Activated CD8-positive, alpha-beta T cell treated with anti-CD3 and anti-CD28 coated beads for 36 hours (primary cell): ENCODE measurements at regions of chr1 and their contacts with region 1.

Region 1: DNA sequence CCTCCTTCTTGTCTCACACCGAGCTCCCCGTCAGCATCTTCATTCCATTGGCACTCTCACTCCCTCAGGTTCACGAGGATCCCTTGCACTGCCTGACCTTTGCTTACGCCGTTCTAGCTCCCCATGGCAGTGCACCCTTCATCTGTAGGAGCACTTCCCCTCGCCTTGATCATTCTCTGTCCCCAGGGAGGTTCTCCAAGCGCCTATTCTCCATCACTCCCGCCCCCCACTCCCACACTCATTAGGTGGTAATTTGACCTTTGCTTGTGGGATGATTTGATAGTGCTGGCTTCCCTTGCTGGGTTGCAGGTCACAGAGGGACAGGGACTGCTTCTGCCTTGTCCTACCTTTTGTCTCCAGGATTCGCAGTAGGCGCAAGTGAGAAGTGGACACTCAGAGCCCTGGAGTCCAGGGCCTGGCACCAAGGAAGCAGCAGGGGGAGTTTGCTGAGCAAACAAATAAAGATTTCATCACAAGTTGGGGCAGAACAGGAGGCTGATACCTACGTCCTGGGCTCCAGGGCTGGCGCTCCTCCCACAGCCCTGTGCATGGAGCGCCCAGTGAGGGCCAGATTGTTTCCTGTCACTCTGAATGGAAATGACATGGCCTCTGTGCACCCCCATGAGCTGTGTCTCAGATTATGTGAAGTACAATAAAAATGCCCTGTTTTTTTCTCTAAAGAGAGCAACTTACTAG is 82.0 kb upstream of the RUNX3 start:
- DNase-seq: peak; percentile 74
- ATAC-seq: peak; percentile 79
- H3K4me3 Mint-ChIP-seq: no peak overlapping the region
- H3K27ac Mint-ChIP-seq: peak overlapping the region; percentile 86
- H3K4me1 Mint-ChIP-seq: peaks cover 68% of the 10 kb centered on the region
- H3K27me3 Mint-ChIP-seq: no peaks in the 10 kb centered on the region
- CTCF ChIP-seq: no peak

Region 2: DNA sequence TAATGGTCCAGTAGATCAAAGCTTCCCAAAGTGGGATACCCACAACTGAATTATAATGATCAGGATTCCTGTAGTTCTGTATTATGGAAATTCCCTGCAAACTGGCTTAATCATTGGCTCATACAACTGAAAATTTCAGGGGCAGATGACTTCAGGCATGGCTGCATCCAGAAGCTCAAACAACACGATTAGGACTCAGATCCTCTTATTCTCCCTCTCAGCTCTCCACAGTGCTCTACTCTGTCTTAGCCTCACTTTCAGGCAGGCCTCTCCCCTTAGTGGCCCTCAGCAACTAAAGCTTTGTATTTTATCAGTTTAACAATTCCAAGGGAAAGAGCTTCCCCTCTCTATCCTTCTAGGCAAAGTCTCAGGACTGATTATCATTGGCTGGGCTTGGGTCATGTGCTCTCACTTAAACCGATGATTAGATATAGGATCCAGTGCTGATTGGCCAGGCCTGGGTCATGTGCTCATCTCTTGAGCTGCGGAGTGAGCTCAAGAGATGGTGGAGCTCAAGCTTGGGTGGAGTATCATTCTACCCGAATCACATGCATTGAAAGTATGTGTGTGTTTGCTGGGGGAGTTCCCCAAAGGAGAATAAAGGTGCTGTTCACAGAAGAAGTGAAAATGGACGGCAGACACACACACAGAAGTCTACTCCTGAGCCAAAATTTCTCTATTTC is 24.1 kb before region 1 on chr1:
- CTCF ChIA-PET with region 1: interaction called, 9 read pairs
- POLR2A ChIA-PET with region 1: interaction called, 24 read pairs
- intact Hi-C with region 1: no loop called
- DNase-seq: peak; percentile 83
- ATAC-seq: peak; percentile 76
- H3K4me3 Mint-ChIP-seq: no peak overlapping the region
- H3K27ac Mint-ChIP-seq: peak overlapping the region; percentile 82
- H3K4me1 Mint-ChIP-seq: peaks cover 95% of the 10 kb centered on the region
- H3K27me3 Mint-ChIP-seq: no peaks in the 10 kb centered on the region
- CTCF ChIP-seq: no peak

Region 3: DNA sequence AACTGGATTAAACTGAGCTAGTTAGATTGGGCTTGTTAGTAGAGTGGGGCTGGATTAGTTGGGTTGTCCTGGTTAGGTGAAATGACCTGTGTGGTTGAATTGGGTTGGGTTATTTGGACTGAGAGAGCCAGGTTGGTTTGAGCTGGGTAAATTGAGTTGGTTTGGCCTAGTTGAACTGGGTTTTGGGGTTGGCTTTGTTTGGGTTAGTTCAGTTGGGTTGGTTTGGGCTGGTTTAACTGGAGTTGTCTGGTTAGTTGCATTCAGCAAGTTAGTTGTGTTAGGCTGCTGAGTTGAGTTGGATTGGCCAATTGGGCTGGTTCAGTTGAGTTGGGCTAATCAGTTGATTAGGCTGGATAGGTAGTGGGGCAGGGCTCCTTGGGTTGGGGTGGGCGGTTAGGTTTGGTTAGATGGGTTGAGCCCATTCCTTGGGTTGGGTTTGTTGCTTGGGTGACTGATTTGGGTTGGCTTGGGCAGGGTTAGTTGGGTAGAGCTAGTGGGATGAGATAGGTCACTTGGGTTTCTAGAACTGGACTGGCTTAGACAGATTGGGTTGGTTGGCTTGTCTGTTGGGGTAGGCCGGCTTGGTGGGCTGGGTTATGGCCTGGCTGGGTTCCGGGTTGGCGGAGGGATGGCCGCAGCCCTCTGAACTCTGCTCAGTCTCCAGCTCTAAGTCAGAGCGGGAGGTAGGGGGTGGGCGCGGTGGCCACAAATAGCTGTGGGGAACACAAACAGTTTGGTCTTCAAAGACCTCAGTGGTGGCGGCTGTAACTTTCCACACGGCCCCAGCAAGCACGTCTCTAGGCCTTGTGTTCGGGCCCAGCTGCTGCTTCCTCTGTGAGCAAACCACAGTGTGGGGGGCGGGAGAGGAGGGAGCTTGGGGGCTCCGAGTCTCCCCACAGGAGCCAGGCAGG is 14.9 kb before region 1 on chr1:
- CTCF ChIA-PET with region 1: interaction called, 22 read pairs
- POLR2A ChIA-PET with region 1: interaction called, 24 read pairs
- intact Hi-C with region 1: no loop called
- DNase-seq: peak; percentile 99
- ATAC-seq: peak; percentile 74
- H3K4me3 Mint-ChIP-seq: peak overlapping the region; percentile 73
- H3K27ac Mint-ChIP-seq: peak overlapping the region; percentile 97
- H3K4me1 Mint-ChIP-seq: peaks cover 92% of the 10 kb centered on the region
- H3K27me3 Mint-ChIP-seq: no peaks in the 10 kb centered on the region
- CTCF ChIP-seq: no peak

Region 4: GRCh38 chr1:25053576-25054250 is 41.6 kb after region 1 on chr1:
- CTCF ChIA-PET with region 1: no interaction called
- POLR2A ChIA-PET with region 1: no interaction called
- intact Hi-C with region 1: no loop called
- DNase-seq: no peak
- ATAC-seq: no peak
- H3K4me3 Mint-ChIP-seq: no peak overlapping the region
- H3K27ac Mint-ChIP-seq: no peak overlapping the region
- H3K4me1 Mint-ChIP-seq: no peaks in the 10 kb centered on the region
- H3K27me3 Mint-ChIP-seq: peaks cover 3% of the 10 kb centered on the region
- CTCF ChIP-seq: no peak